GM10248 (cell line): ENCODE measurements at regions of chr10 and their contacts with region 1.

Region 1: DNA sequence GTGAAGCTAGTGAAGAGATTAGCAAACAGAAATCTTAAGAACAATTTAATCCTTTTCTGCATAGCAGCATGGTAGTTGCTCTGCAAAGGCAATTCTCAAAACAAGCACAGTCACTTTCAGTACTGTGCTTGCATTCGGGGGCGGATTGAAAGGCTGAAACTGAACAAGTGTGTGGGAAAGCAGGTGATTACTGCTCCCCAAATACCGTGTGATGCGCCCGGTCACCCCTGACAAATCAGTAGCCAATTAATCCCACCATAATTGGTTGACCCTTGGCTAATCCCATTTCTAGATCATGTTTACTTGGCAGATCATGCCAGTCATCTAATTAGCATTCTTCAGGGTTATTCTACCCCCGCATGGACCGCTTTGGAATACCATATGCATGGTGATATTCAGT is 76.5 kb upstream of the ADRB1 start:
- DNase-seq: no peak
- CTCF ChIP-seq: no peak

Region 2: GRCh38 chr10:113982769-113983168 is 15.6 kb after region 1 on chr10:
- CTCF ChIA-PET with region 1: interaction called, 10 read pairs
- POLR2A ChIA-PET with region 1: no interaction called
- DNase-seq: peak; percentile 33
- CTCF ChIP-seq: no peak

Region 3: GRCh38 chr10:113999531-113999930 is 32.4 kb after region 1 on chr10:
- CTCF ChIA-PET with region 1: no interaction called
- POLR2A ChIA-PET with region 1: no interaction called
- DNase-seq: no peak
- CTCF ChIP-seq: no peak

Region 4: GRCh38 chr10:114486938-114487814 is 520.0 kb after region 1 on chr10:
- CTCF ChIA-PET with region 1: no interaction called
- POLR2A ChIA-PET with region 1: no interaction called
- DNase-seq: no peak
- CTCF ChIP-seq: no peak